ENCODE measurements at regions of chr17 and their contacts with region 1.

Region 1: DNA sequence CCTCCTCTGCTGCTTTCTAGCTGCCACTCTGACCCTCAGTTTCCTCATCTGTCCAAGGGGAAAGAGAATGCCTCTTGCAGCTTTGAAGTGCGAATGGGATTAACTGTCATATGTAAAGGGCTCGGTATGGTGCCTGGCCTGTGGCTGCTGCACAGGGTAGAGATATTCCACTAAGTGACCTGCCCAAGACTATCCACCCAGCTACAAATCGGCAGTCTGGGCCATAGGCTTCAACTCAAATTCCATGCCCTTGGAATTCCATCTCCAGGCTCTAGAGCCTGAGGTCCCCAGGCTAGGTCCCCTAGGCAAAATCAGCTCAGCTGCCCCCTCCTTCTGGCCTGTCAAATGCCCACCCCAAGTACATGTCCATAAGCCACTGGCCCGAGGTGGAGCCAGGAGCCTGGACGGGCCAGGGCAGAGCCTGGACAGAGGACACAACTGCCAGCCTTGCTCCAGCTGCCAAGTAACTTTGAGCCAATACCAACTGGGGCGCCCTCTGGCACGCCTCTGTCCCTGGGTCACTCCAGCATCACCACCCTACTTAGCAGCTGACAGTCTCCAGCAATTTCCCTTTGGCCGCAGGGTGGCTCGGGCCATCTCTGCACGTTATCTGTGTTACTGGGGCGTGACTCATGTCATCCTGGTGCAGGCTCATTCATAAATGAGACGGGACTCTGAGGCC is 57.2 kb downstream of the SDK2 start:
- DNase-seq: no peak
- ATAC-seq: no peak
- H3K4me3 Mint-ChIP-seq: peak overlapping the region; percentile 3
- H3K27ac Mint-ChIP-seq: peak overlapping the region; percentile 90
- H3K4me1 Mint-ChIP-seq: peaks cover 79% of the 10 kb centered on the region
- H3K27me3 Mint-ChIP-seq: no peaks in the 10 kb centered on the region
- CTCF ChIP-seq: no peak

Region 2: GRCh38 chr17:73566905-73567782 is 19.9 kb before region 1 on chr17:
- CTCF ChIA-PET with region 1: interaction called, 7 read pairs
- POLR2A ChIA-PET with region 1: interaction called, 26 read pairs
- intact Hi-C with region 1: loop called (anchors 1 kb)
- DNase-seq: peak; percentile 51
- ATAC-seq: peak; percentile 89
- H3K4me3 Mint-ChIP-seq: peak overlapping the region; percentile 46
- H3K27ac Mint-ChIP-seq: peak overlapping the region; percentile 92
- H3K4me1 Mint-ChIP-seq: peaks cover 30% of the 10 kb centered on the region
- H3K27me3 Mint-ChIP-seq: no peaks in the 10 kb centered on the region
- CTCF ChIP-seq: no peak

Region 3: DNA sequence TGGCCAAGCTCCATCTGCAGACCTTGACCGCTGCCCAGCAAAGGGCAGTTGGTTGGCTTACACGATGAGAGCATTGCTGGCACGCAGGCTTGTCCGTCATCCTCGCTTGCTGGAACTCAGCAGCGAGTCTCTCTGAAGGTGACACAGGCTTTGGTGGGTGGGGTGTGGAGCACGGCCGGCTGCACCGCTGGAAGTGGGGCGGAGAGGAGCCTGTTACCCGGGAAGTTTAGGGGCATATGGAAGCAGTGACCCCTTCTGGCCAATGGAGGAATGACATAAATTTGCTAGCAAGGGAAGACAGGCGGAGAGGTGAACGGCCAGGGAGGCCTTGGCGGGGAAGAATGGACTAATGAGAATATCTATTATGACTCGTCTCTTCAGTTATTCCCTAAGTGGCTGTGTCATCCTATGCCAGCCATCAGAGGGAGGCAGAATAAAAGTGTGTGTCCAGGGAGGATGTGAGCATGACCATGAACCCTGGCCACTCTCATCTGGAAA is 123.1 kb after region 1 on chr17:
- CTCF ChIA-PET with region 1: interaction called, 11 read pairs
- POLR2A ChIA-PET with region 1: no interaction called
- intact Hi-C with region 1: no loop called
- DNase-seq: no peak
- ATAC-seq: peak; percentile 47
- H3K4me3 Mint-ChIP-seq: peak overlapping the region; percentile 1
- H3K27ac Mint-ChIP-seq: no peak overlapping the region
- H3K4me1 Mint-ChIP-seq: peaks cover 27% of the 10 kb centered on the region
- H3K27me3 Mint-ChIP-seq: peaks cover 10% of the 10 kb centered on the region
- CTCF ChIP-seq: peak; percentile 27

Region 4: GRCh38 chr17:73720187-73720834 is 133.2 kb after region 1 on chr17:
- CTCF ChIA-PET with region 1: no interaction called
- POLR2A ChIA-PET with region 1: no interaction called
- intact Hi-C with region 1: no loop called
- DNase-seq: no peak
- ATAC-seq: no peak
- H3K4me3 Mint-ChIP-seq: no peak overlapping the region
- H3K27ac Mint-ChIP-seq: no peak overlapping the region
- H3K4me1 Mint-ChIP-seq: peaks cover 10% of the 10 kb centered on the region
- H3K27me3 Mint-ChIP-seq: peaks cover 6% of the 10 kb centered on the region
- CTCF ChIP-seq: no peak

Region 5: DNA sequence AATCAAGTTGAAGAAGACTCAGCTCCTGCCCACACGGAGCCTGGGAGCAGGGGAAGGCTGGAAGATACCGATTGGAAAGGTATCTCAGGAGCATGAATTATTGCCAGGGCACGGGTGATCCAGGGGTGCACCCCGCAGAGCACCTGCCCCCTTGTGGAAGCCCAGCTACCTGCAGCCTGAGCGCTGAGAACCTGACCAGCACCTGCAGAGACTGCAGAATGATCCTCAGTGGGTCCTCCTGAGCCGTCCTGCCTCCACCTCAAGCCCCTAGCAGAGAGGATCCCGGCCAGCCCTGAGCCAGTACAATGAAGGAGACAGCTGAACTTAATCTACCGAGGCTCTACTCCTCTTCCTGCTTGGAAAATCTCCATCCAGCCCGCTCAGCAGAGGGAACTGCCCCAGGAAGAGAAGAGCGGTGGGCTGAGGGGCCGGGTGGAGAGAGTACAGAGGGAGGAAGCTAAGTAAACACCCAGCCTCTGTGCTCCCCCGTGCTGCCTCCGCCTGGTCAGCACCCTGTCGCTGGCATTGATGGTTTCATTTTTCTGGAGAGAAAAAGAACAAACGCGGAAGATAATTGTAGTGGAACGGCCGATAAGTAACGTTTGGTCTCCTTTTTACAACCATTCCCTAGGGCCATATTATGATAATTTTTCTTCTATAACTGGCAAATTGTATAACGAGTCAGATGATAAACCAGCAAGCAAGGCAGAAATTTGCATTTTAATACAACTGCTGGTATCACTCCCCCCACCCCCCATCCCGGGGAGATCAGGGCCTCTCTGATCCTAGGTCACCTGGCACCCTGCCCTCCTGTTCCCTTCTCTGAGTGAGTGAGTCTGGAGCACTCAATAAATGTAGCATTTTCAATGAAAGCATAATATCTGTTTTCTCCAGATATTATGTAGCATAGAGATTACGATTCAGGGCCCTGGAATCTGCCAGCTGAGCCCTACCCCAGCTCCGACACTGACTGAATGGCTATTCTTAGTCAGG is 411.9 kb after region 1 on chr17:
- CTCF ChIA-PET with region 1: no interaction called
- POLR2A ChIA-PET with region 1: no interaction called
- intact Hi-C with region 1: loop called (anchors 1 kb)
- DNase-seq: peak; percentile 30
- ATAC-seq: peak; percentile 34
- H3K4me3 Mint-ChIP-seq: no peak overlapping the region
- H3K27ac Mint-ChIP-seq: no peak overlapping the region
- H3K4me1 Mint-ChIP-seq: no peaks in the 10 kb centered on the region
- H3K27me3 Mint-ChIP-seq: peaks cover 14% of the 10 kb centered on the region
- CTCF ChIP-seq: no peak

Measured in activated B cell treated with CpG ODN at 0.5 μM for 24 hours (primary cell).